ENCODE measurements at regions of chr10 and their contacts with region 1.

Region 1: GRCh38 chr10:69392481-69393000 is 24.2 kb downstream of the TACR2 start:
- DNase-seq: peak; percentile 83 to 92 (median 87)
- ATAC-seq: peak; percentile 92
- H3K4me3 ChIP-seq: no peak overlapping the region
- H3K27ac ChIP-seq: peak overlapping the region; percentile 10; the same call in 1 of the 3 replicates
- H3K4me1 ChIP-seq: peaks cover 12 to 17% of the 10 kb centered on the region in 2 experiments; a peak in 4 of 5 replicates
- H3K27me3 ChIP-seq: no peaks in the 10 kb centered on the region
- CTCF ChIP-seq: peak; percentile 92 to 98 (median 97)
- EP300 ChIP-seq: no peak
- POLR2A ChIP-seq: no peak; the same call in 1 of the 2 replicates
- RAD21 ChIP-seq: peak; percentile 96 to 98

Region 2: DNA sequence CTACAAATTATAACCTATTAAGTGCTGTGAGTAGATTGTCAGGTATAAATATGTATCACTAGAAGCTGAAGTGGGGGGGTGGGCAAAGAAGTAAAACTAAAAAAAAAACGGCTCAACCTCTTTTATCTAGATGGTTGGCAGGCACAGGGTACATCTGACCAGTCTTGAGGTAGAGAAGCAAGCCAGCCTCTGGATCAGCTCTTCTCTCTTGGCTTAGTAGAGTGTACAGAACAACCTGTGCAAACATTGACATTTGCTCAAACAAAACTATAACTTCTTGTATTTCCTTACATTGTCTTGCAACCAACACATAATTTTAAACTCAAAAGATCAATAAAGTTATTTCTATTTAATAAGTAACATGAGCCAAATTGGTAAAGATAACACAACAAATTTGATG is 946.4 kb before region 1 on chr10:
- CTCF ChIA-PET with region 1: no interaction called
- POLR2A ChIA-PET with region 1: no interaction called
- in situ Hi-C with region 1: no loop called
- intact Hi-C with region 1: no loop called
- DNase-seq: no peak
- ATAC-seq: no peak
- H3K4me3 ChIP-seq: no peak overlapping the region
- H3K27ac ChIP-seq: no peak overlapping the region
- H3K4me1 ChIP-seq: no peaks in the 10 kb centered on the region
- H3K27me3 ChIP-seq: no peaks in the 10 kb centered on the region
- CTCF ChIP-seq: no peak
- EP300 ChIP-seq: no peak
- POLR2A ChIP-seq: no peak
- RAD21 ChIP-seq: no peak

Region 3: DNA sequence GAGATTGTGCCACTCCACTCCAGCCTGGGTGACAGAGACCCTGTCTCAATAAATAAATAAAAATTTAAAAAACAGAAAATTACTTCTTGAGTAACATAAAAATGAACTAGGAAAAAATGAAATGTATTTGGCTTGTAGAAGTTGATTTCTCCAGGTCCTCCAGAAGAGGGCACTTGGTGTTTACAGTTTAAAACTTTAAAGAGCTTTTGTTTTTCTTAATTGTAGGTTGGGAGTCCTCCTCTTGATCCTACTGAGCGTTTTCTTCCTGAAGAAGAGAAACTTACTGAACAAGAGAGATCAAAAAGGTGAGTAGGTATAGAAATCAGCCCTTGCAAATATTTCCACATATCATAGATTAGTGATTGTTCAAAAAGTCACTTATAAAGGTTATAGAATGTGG is 387.7 kb before region 1 on chr10:
- CTCF ChIA-PET with region 1: interaction called, 11 read pairs
- POLR2A ChIA-PET with region 1: no interaction called
- in situ Hi-C with region 1: no loop called
- intact Hi-C with region 1: loop called (anchors 5 kb)
- DNase-seq: peak in 2 of 4 experiments; percentile 38 to 56
- ATAC-seq: peak; percentile 83
- H3K4me3 ChIP-seq: no peak overlapping the region
- H3K27ac ChIP-seq: no peak overlapping the region
- H3K4me1 ChIP-seq: no peaks in the 10 kb centered on the region
- H3K27me3 ChIP-seq: no peaks in the 10 kb centered on the region
- CTCF ChIP-seq: peak; percentile 54 to 90 (median 62); a peak in 5 of 6 replicates
- EP300 ChIP-seq: no peak
- POLR2A ChIP-seq: no peak
- RAD21 ChIP-seq: peak; percentile 91 to 98

Region 4: GRCh38 chr10:69237528-69238159 is 154.9 kb before region 1 on chr10:
- CTCF ChIA-PET with region 1: interaction called, 71 read pairs
- POLR2A ChIA-PET with region 1: interaction called, 14 read pairs
- in situ Hi-C with region 1: no loop called
- intact Hi-C with region 1: loop called (anchors 1 kb)
- DNase-seq: peak; percentile 89 to 94 (median 92)
- ATAC-seq: peak; percentile 97
- H3K4me3 ChIP-seq: no peak overlapping the region
- H3K27ac ChIP-seq: no peak overlapping the region
- H3K4me1 ChIP-seq: peaks cover 13% of the 10 kb centered on the region in 2 experiments; a peak in 4 of 5 replicates
- H3K27me3 ChIP-seq: no peaks in the 10 kb centered on the region
- CTCF ChIP-seq: peak; percentile 94 to 99 (median 97)
- EP300 ChIP-seq: no peak
- POLR2A ChIP-seq: no peak
- RAD21 ChIP-seq: peak; percentile 99 to 100

Region 5: GRCh38 chr10:69248117-69248730 is 144.3 kb before region 1 on chr10:
- CTCF ChIA-PET with region 1: no interaction called
- POLR2A ChIA-PET with region 1: interaction called, 5 read pairs
- in situ Hi-C with region 1: loop called (anchors 5 kb)
- intact Hi-C with region 1: no loop called
- DNase-seq: peak in 2 of 4 experiments; percentile 35 to 52
- ATAC-seq: peak; percentile 60
- H3K4me3 ChIP-seq: no peak overlapping the region
- H3K27ac ChIP-seq: no peak overlapping the region
- H3K4me1 ChIP-seq: peaks cover 0 to 20% of the 10 kb centered on the region in 2 experiments; a peak in 2 of 5 replicates
- H3K27me3 ChIP-seq: no peaks in the 10 kb centered on the region
- CTCF ChIP-seq: no peak
- EP300 ChIP-seq: no peak
- POLR2A ChIP-seq: no peak
- RAD21 ChIP-seq: no peak

Measured in K562 (cell line).